ENCODE measurements at regions of chr1 and their contacts with region 1.

Region 1: DNA sequence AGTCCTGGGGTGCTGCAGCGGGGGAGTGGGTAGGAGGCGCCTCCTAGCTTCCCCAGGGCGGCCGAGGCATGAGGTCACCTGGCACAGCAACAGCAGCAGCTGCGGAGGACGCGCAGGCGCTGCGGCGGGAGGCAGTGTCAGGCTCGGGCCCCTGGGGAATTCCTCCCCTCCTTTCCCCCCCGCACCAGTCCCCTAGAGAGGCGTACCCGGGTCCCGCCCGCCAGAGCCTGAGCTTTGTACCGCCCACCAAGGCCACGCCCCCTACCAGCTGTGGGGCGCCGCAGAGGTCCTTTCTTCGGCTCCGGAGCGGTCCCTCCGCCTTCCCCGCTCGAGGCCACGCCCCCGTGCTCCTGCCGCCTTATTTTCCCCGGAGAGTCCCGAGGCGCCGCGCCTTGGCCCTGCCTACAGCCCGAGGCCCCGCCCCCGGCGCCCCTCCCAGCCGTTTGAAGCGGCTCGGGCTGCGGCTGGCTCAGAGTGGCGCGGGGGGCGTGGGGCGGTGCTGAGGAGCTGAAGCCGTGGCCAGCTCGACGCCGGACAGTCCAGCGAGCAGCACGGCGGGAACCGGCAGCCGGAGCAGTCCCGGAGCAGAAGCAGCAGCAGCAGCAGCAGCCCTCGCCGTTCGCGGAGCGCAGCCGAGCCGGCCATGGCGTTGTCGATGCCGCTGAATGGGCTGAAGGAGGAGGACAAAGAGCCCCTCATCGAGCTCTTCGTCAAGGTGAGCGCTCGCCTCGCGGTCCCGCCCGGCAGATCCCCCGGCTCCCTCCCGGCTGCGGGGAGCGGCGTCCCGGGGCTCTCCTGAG is at the start of gene CLIC4:
- DNase-seq: peak; percentile 96

Region 2: GRCh38 chr1:24673336-24673735 is 71.8 kb before region 1 on chr1:
- CTCF ChIA-PET with region 1: no interaction called
- POLR2A ChIA-PET with region 1: no interaction called
- DNase-seq: no peak

Region 3: GRCh38 chr1:24688621-24689195 is 56.4 kb before region 1 on chr1:
- CTCF ChIA-PET with region 1: interaction called, 7 read pairs
- POLR2A ChIA-PET with region 1: interaction called, 15 read pairs
- DNase-seq: peak; percentile 80

Region 4: DNA sequence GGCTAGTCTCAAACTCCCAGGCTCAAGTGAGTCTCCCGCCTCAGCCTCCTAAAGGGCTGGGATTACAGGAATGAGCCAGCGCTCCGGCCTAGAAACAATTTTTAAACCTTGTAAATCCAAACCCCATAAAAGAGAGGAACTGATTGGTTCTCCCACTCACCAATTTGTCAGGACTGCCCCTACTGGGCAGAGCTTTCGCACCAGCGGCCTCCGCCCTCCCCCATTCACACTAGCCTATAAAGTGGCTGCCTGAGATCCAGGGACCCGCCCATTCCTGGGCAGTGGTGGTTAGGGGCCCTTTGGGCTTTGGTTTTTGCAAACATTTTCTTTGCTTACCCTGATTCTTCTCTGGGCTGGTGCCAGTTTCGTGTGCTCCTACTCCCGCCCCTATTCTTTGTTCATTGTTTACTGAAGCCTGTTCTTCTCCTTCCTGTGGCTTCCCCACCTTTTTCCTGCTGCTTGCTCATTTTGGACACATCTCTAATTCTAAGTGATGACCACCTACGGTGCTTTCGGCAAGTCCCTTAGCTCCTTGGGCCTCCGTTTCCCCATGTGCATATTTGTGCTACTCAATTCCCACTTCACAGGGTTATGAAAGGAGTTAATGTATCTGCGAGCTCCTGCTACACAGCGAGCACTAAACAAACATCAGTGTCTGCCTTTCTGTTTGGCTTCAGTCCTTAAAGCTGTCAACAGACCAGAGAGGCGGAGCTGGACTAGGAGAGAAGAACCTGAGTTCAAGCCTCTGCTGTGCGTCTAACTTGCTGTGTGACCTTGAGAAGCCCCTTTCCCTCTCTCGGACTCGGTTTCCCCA is 39.6 kb before region 1 on chr1:
- CTCF ChIA-PET with region 1: no interaction called
- POLR2A ChIA-PET with region 1: interaction called, 22 read pairs
- DNase-seq: peak; percentile 96

Region 5: DNA sequence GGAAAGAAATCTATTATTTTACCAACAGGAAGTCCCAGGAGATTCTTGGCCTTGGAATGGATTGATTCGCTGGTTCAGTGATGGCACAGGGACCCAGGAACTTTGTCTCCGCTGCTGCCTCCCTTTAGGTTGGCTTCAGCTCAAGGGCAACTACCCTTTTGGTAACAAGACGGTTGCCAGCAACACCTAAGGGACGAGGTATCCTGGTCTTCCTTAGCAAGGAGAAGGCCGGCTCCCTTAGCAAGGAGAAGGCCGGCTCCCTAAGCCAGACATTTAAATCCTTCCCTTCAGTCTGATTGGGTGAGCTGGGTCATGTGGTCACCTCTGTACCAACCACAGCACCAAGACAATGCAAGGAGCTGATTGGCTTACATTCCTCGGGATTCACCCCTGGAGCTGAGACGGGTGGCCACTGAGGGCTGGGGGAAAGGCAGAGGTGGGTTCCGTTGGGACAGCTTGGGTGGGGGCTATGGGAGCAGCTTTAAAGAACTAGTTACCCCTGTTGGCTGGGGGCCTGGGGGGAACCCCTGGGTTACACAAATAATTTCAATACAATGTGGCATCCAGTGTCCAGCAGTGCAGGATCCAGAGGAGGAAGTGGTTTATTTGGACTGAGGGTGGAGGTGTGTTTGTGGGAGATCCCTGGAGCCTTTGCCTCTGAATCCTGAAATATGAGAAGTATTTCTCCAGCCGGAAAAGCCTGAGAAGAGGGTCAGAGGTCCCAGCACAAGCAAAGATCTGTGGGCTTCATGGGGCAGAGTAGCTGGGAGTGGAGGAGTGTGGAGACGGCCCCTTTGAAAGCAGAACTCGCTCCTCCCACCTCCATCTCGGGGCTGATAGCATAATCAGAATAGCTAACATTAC is 20.5 kb before region 1 on chr1:
- CTCF ChIA-PET with region 1: interaction called, 3 read pairs
- POLR2A ChIA-PET with region 1: interaction called, 21 read pairs
- DNase-seq: peak; percentile 70

Region 6: DNA sequence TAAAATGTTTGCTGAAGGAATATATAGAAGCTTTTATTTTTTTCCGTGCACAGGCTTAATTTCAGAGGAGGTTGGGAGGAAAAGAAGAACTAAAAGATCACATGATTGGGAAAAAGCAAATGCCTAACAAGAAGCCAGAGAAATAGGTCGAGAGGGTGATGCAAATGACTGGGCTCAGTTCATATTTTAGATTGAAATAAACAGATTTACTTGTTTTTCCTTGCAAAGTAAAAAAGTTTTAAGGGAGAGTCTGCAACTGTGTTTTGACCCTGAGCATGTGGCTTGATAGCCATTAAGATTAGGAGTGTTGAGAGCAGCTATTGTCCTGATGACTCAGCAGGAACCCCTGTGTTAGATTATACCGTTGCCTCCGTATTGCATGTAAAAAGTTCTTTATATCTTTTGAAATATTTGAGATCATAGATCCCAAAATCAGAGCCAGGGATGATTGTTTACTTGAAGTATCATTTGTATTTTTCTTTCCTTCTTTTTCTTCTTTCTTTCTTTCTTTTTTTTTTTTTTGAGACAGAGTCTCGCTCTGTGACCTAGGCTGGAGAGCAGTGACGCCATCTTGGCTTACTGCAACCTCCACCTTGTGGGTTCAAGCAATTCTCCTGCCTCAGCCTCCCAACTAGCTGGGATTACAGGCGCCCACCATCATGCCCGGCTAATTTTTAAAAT is 20.3 kb after region 1 on chr1:
- CTCF ChIA-PET with region 1: no interaction called
- POLR2A ChIA-PET with region 1: interaction called, 23 read pairs
- DNase-seq: no peak

Region 7: DNA sequence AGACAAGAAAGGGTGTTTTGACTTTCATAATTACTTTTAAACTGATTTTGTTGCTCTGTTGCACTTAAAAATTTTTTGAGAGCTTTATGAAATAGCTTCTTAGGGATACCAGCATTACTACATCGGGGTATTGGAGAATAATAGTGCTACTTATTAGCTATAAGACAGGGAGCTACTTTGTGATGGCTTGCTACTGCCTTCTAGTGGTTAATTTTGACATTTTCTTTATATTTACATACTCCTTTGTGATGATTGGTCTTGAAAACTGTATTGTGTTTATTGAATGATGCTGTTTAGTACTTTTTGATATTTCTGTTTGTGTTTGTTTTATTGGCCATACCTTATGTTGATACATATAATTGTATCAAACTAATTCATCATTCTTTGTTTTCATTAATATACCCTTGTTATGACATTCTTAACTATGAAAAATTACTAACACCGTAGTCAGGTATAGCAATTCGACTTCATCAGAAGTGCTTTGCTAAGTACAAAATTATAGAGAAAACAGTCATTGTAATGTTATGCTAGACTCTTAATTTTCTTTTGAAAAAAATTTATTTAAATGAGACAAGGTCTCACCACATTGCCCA is 85.7 kb after region 1 on chr1:
- CTCF ChIA-PET with region 1: interaction called, 10 read pairs
- POLR2A ChIA-PET with region 1: interaction called, 14 read pairs
- DNase-seq: peak; percentile 27